ENCODE measurements at regions of chr12 and their contacts with region 1.

Region 1: DNA sequence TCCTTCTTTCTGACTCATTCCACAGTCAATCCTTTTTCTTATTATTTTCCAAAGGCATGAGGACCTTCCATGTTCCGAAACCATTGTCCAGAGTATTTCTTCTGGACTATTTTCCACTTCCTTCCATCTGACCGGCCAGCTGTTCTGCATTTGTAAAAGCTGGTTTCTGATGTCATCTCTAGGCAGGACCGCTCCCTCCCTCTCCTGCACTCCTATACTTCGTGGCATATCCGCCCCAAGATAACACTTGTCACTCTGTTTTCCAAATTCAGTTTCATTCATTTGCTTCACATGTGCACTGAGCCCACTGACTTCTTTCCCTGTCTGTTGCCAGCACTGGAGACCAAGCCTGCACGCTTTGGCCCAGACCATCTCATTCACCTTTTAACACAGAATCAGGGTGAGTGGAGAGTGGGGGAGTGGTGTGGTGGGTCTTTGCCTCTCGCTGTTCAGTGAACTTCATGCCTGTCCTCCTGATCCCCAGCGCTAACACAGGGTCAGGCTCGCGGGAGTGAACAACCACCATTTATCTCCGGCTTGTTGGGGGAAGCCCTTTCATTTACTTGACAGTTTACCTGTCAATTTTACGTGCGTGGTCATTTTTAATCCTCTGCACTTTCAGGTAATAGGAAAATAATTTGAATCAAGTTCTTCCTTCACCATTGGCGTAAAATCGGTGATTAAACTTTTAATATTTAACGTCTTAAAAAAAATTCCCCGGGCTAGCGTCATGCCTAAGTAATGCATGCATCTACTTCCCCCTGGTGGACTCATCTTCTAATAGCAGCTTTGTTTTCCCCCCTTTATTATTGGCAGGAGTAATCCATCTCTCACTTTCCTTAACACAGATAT is 52.5 kb downstream of the C12orf75 start:
- DNase-seq: peak; percentile 80
- H3K4me3 Mint-ChIP-seq: no peak overlapping the region
- H3K27ac Mint-ChIP-seq: no peak overlapping the region
- H3K4me1 Mint-ChIP-seq: no peaks in the 10 kb centered on the region
- H3K27me3 Mint-ChIP-seq: no peaks in the 10 kb centered on the region

Region 2: DNA sequence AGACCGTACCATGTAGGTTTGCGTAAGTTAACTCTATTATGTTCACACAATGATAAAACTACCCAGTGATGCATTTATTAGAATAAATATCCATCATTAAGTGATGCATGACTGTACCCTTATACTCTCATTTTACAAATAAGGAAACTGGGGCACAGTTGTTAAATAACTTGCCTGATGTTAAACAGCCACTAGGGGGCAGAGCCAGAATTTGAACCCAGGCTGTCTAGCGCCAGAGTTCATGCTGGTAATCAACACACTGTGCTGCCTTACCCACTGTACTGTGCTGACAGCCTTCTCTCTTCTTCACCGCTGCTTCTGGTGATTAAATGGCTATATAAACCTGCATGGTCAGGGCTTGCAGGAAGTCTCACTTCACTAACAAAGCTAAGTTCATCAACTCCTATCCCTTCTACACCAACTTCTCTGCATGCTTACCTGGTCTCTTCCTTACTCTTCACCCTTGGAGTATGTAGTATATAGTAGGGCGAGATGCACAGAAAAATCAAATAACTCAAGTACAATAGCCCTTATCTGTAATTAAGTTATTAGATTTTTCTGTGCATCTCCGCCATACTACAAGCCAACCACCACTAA is 103.4 kb before region 1 on chr12:
- intact Hi-C with region 1: loop called (anchors 1 kb)
- DNase-seq: peak; percentile 84
- H3K4me3 Mint-ChIP-seq: no peak overlapping the region
- H3K27ac Mint-ChIP-seq: no peak overlapping the region
- H3K4me1 Mint-ChIP-seq: peaks cover 4% of the 10 kb centered on the region
- H3K27me3 Mint-ChIP-seq: peaks cover 12% of the 10 kb centered on the region

Region 3: GRCh38 chr12:105319691-105320209 is 63.2 kb before region 1 on chr12:
- intact Hi-C with region 1: loop called (anchors 2 kb)
- DNase-seq: peak; percentile 71
- H3K4me3 Mint-ChIP-seq: no peak overlapping the region
- H3K27ac Mint-ChIP-seq: no peak overlapping the region
- H3K4me1 Mint-ChIP-seq: peaks cover 48% of the 10 kb centered on the region
- H3K27me3 Mint-ChIP-seq: no peaks in the 10 kb centered on the region

Region 4: GRCh38 chr12:105445249-105446015 is 62.4 kb after region 1 on chr12:
- intact Hi-C with region 1: no loop called
- DNase-seq: no peak
- H3K4me3 Mint-ChIP-seq: no peak overlapping the region
- H3K27ac Mint-ChIP-seq: no peak overlapping the region
- H3K4me1 Mint-ChIP-seq: no peaks in the 10 kb centered on the region
- H3K27me3 Mint-ChIP-seq: peaks cover 19% of the 10 kb centered on the region